A673 (cell line): ENCODE measurements at regions of chr15 and their contacts with region 1.

Region 1: DNA sequence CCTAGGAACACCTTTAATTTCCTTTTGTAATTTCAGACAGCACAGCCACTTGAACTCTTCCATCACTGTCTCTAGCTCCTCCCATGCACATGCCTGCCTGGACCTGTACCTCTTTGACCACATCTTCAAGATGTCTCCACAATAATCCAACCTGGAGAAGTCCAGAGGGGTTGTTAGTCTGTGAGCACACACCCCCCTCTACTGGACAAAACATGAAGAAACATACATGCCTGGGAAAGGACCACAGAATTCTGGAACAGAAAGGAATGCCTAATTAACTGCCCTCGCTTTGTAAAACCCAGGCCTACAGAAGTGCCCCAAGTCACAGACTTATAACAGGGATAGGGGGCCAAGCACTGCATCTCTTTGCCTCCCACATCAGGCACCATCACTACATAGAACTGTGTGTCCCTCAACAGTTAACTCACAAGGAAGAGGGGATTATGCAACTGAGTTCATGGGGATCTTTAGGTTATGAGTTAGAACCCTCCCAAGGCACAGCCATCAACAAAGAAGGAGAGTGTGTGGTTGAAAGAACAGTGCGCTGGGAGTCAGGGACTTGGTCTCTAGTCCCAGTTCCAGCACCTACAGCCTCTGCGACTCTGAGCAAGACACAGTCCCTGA is 61.7 kb downstream of the FMN1 start:
- DNase-seq: peak; percentile 71
- H3K4me3 ChIP-seq: no peak overlapping the region
- H3K27ac ChIP-seq: no peak overlapping the region
- H3K4me1 ChIP-seq: peaks cover 9% of the 10 kb centered on the region
- H3K27me3 ChIP-seq: peaks cover 22% of the 10 kb centered on the region
- CTCF ChIP-seq: peak; percentile 74

Region 2: GRCh38 chr15:32657198-32657883 is 475.5 kb before region 1 on chr15:
- CTCF ChIA-PET with region 1: no interaction called
- POLR2A ChIA-PET with region 1: no interaction called
- intact Hi-C with region 1: loop called (anchors 5 kb)
- DNase-seq: no peak
- H3K4me3 ChIP-seq: no peak overlapping the region
- H3K27ac ChIP-seq: no peak overlapping the region
- H3K4me1 ChIP-seq: no peaks in the 10 kb centered on the region
- H3K27me3 ChIP-seq: no peaks in the 10 kb centered on the region
- CTCF ChIP-seq: no peak

Region 3: GRCh38 chr15:33007303-33007855 is 125.5 kb before region 1 on chr15:
- CTCF ChIA-PET with region 1: no interaction called
- POLR2A ChIA-PET with region 1: no interaction called
- intact Hi-C with region 1: loop called (anchors 5 kb)
- DNase-seq: peak; percentile 24
- H3K4me3 ChIP-seq: no peak overlapping the region
- H3K27ac ChIP-seq: no peak overlapping the region
- H3K4me1 ChIP-seq: no peaks in the 10 kb centered on the region
- H3K27me3 ChIP-seq: peaks cover 39% of the 10 kb centered on the region
- CTCF ChIP-seq: 0 out of 2 replicates have a peak, but pooled peaks have one; percentile 23

Region 4: DNA sequence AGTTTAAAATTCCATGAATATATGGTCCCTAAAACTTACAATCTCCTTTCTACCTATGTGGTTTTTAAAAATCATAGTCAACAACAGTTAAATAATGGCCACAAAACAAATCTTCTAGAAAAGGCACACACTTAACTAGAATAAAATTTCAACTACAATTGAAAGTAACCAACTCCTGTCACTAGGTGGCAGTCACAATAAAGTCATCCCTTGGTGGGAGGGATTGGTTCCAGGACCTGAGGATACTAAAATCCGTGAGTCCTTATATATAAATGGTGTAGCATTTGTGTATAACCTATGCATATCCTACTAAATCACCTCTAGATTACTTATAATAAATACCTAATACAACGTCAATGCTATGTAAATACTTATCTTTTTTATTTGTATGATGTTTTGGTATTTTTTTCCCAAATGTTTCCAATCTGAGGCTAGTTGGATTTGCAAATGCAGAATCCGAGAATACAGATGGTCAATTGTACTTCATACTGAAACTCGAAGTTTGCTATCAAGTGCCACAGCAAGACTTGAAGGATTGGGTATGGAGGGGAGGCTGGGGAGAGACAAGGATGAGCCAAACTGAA is 110.9 kb before region 1 on chr15:
- CTCF ChIA-PET with region 1: no interaction called
- POLR2A ChIA-PET with region 1: no interaction called
- intact Hi-C with region 1: loop called (anchors 1 kb)
- DNase-seq: peak; percentile 66
- H3K4me3 ChIP-seq: no peak overlapping the region
- H3K27ac ChIP-seq: no peak overlapping the region
- H3K4me1 ChIP-seq: no peaks in the 10 kb centered on the region
- H3K27me3 ChIP-seq: no peaks in the 10 kb centered on the region
- CTCF ChIP-seq: peak; percentile 71

Region 5: DNA sequence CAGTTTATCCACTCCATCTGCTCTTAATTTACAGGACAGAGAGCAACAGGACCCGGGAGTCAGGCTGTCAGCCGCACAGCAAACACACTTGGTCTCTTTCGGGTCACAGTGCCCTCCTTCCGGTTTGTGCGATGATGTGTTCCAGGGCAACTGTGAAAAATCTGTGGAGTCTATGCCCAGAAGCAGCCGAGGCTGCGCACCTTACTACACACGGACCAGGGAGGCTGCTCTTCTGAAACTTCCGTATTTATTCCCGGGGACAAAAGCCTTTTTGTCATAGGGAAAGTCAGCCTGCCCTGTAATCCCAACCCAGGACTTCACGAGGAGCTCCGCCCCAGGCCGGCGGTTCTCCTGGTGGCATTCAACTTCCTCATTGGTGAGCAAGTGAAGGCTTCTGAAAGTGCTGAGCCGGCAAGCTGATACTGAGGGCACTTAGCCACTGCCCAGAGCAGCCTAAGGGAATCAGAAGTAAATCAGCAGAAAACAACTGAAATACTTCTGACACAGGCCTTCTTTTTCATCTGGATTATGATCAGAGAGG is 64.8 kb before region 1 on chr15:
- CTCF ChIA-PET with region 1: no interaction called
- POLR2A ChIA-PET with region 1: no interaction called
- intact Hi-C with region 1: no loop called
- DNase-seq: no peak
- H3K4me3 ChIP-seq: peak overlapping the region; percentile 5
- H3K27ac ChIP-seq: no peak overlapping the region
- H3K4me1 ChIP-seq: peaks cover 20% of the 10 kb centered on the region
- H3K27me3 ChIP-seq: peaks cover 69% of the 10 kb centered on the region
- CTCF ChIP-seq: no peak

Region 6: GRCh38 chr15:33086507-33087121 is 46.2 kb before region 1 on chr15:
- CTCF ChIA-PET with region 1: interaction called, 9 read pairs
- POLR2A ChIA-PET with region 1: no interaction called
- intact Hi-C with region 1: loop called (anchors 1 kb)
- DNase-seq: peak; percentile 60
- H3K4me3 ChIP-seq: no peak overlapping the region
- H3K27ac ChIP-seq: no peak overlapping the region
- H3K4me1 ChIP-seq: peaks cover 7% of the 10 kb centered on the region
- H3K27me3 ChIP-seq: peaks cover 12% of the 10 kb centered on the region
- CTCF ChIP-seq: peak; percentile 74

Region 7: DNA sequence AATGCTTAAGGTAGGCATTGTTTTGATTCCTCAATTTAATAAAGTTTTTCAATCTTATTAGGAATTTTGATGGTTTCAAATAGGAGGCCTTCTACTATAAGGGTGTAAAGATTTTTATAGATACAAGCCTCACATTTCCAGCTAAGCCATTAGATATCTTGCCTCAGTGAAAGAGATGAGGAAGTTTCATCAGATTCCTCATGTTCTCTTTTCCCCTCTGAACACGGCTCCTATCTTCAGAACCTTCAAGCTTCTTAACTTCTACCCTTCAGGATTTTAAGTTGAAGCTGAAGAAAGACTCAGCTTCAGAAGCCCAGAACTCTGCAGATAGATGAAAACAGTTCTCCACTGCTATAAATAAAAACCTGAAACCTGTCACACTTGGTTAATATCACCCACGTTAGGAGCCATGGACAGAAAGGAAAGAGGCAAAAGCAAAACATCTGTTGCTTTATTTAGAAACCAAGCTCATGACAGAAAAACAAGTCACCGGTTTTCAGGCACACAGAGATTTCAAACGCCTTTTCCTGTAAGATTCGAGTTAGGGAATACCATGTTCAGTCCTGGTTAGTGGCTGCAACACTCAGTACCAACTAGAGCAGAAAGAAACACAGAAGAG is 1532.8 kb after region 1 on chr15:
- CTCF ChIA-PET with region 1: no interaction called
- POLR2A ChIA-PET with region 1: no interaction called
- intact Hi-C with region 1: no loop called
- DNase-seq: no peak
- H3K4me3 ChIP-seq: no peak overlapping the region
- H3K27ac ChIP-seq: no peak overlapping the region
- H3K4me1 ChIP-seq: no peaks in the 10 kb centered on the region
- H3K27me3 ChIP-seq: peaks cover 54% of the 10 kb centered on the region
- CTCF ChIP-seq: no peak